A549 (cell line): ENCODE measurements at regions of chr22 and their contacts with region 1.

Region 1: DNA sequence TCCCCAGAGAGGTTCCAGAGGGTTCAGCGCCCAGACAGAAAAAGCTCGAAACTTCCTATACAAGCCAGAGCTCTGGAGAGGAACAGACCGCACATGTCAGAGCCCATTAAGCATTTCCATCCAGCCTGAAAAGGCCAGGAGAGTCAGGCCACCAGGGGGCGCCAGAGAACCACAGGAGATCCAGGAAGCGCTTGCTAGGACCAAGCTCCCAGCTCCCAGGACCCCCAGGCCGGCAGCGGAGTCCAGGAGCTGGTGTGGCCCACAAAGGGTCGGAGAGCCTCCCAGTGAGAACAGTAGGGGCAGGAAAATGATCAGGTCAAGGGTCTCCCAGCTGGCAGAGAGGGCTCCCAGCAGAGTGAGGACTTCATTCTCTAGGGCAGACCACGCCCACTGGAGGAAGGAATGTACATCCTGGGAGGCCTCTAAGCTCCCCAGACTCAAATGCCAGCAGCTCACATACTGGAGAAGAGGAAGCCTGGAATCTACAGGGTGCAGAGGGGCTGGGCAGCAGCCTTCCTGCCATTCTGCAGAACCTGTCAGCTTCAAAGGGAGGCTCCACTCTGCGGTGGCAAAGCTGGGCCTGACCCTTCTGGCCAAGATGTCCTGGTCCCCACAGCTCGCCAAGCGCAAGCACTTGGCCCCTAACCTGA is 2.1 kb upstream of the MEI1 start:
- DNase-seq: peak; percentile 79 to 80
- ATAC-seq: peak; percentile 92 to 95
- H3K4me3 ChIP-seq: no peak overlapping the region
- H3K27ac ChIP-seq: peak overlapping the region; percentile 60 to 82; a peak in 4 of 6 replicates
- H3K4me1 ChIP-seq: peaks cover 7% of the 10 kb centered on the region; the same call in 1 of the 3 replicates
- CTCF ChIP-seq: peak; percentile 89
- EP300 ChIP-seq: no peak
- POLR2A ChIP-seq: no peak
- RAD21 ChIP-seq: peak; percentile 81 to 83

Region 2: GRCh38 chr22:41656556-41656955 is 40.7 kb before region 1 on chr22:
- CTCF ChIA-PET with region 1: interaction called, 13 read pairs
- POLR2A ChIA-PET with region 1: no interaction called
- DNase-seq: no peak
- ATAC-seq: no peak
- H3K4me3 ChIP-seq: no peak overlapping the region
- H3K27ac ChIP-seq: no peak overlapping the region
- H3K4me1 ChIP-seq: no peaks in the 10 kb centered on the region
- CTCF ChIP-seq: no peak
- EP300 ChIP-seq: no peak
- POLR2A ChIP-seq: no peak
- RAD21 ChIP-seq: no peak

Region 3: GRCh38 chr22:41682033-41682807 is 15.0 kb before region 1 on chr22:
- CTCF ChIA-PET with region 1: interaction called, 33 read pairs
- POLR2A ChIA-PET with region 1: no interaction called
- DNase-seq: no peak
- ATAC-seq: no peak
- H3K4me3 ChIP-seq: no peak overlapping the region
- H3K27ac ChIP-seq: no peak overlapping the region
- H3K4me1 ChIP-seq: peaks cover 4% of the 10 kb centered on the region; the same call in 1 of the 3 replicates
- CTCF ChIP-seq: no peak
- EP300 ChIP-seq: no peak
- POLR2A ChIP-seq: no peak
- RAD21 ChIP-seq: no peak

Region 4: GRCh38 chr22:41725510-41726110 is 28.4 kb after region 1 on chr22:
- CTCF ChIA-PET with region 1: interaction called, 13 read pairs
- POLR2A ChIA-PET with region 1: no interaction called
- DNase-seq: peak in 1 of 2 experiments; percentile 8
- ATAC-seq: peak; percentile 65 to 82
- H3K4me3 ChIP-seq: no peak overlapping the region
- H3K27ac ChIP-seq: no peak overlapping the region
- H3K4me1 ChIP-seq: no peaks in the 10 kb centered on the region
- CTCF ChIP-seq: no peak
- EP300 ChIP-seq: no peak
- POLR2A ChIP-seq: no peak
- RAD21 ChIP-seq: no peak

Region 5: GRCh38 chr22:41746567-41747400 is 49.5 kb after region 1 on chr22:
- CTCF ChIA-PET with region 1: interaction called, 14 read pairs
- POLR2A ChIA-PET with region 1: no interaction called
- DNase-seq: peak; percentile 61 to 78
- ATAC-seq: peak; percentile 99 to 100
- H3K4me3 ChIP-seq: no peak overlapping the region
- H3K27ac ChIP-seq: no peak overlapping the region
- H3K4me1 ChIP-seq: 0 out of 3 replicates have a peak, but pooled peaks cover 2% of the 10 kb centered on the region
- CTCF ChIP-seq: peak; percentile 67
- EP300 ChIP-seq: no peak
- POLR2A ChIP-seq: no peak
- RAD21 ChIP-seq: peak; percentile 63 to 74

Region 6: GRCh38 chr22:41857155-41857859 is 160.1 kb after region 1 on chr22:
- CTCF ChIA-PET with region 1: interaction called, 27 read pairs
- POLR2A ChIA-PET with region 1: interaction called, 3 read pairs
- DNase-seq: peak; percentile 68 to 71
- ATAC-seq: peak; percentile 84 to 87
- H3K4me3 ChIP-seq: no peak overlapping the region
- H3K27ac ChIP-seq: peak overlapping the region in 1 of 2 experiments; percentile 55; a peak in 2 of 6 replicates
- H3K4me1 ChIP-seq: peaks cover 49% of the 10 kb centered on the region
- CTCF ChIP-seq: peak; percentile 59
- EP300 ChIP-seq: no peak
- POLR2A ChIP-seq: no peak
- RAD21 ChIP-seq: peak; percentile 46 to 49; a peak in 4 of 5 replicates

Region 7: GRCh38 chr22:41940832-41941765 is 243.8 kb after region 1 on chr22:
- CTCF ChIA-PET with region 1: interaction called, 81 read pairs
- POLR2A ChIA-PET with region 1: interaction called, 4 read pairs
- DNase-seq: peak; percentile 59 to 74
- ATAC-seq: peak; percentile 87 to 93
- H3K4me3 ChIP-seq: no peak overlapping the region
- H3K27ac ChIP-seq: peak overlapping the region in 1 of 2 experiments; percentile 49; a peak in 1 of 6 replicates
- H3K4me1 ChIP-seq: peaks cover 17% of the 10 kb centered on the region; the same call in 2 of the 3 replicates
- CTCF ChIP-seq: peak; percentile 70
- EP300 ChIP-seq: no peak
- POLR2A ChIP-seq: no peak
- RAD21 ChIP-seq: peak; percentile 75 to 82